ENCODE measurements at regions of chr7 and their contacts with region 1.

Region 1: GRCh38 chr7:151626422-151627115 is 106.9 kb upstream of the RHEB start:
- DNase-seq: peak; percentile 69
- H3K4me3 Mint-ChIP-seq: no peak overlapping the region
- H3K27ac Mint-ChIP-seq: no peak overlapping the region
- H3K4me1 Mint-ChIP-seq: peaks cover 49% of the 10 kb centered on the region
- H3K27me3 Mint-ChIP-seq: no peaks in the 10 kb centered on the region
- CTCF ChIP-seq: peak; percentile 60

Region 2: DNA sequence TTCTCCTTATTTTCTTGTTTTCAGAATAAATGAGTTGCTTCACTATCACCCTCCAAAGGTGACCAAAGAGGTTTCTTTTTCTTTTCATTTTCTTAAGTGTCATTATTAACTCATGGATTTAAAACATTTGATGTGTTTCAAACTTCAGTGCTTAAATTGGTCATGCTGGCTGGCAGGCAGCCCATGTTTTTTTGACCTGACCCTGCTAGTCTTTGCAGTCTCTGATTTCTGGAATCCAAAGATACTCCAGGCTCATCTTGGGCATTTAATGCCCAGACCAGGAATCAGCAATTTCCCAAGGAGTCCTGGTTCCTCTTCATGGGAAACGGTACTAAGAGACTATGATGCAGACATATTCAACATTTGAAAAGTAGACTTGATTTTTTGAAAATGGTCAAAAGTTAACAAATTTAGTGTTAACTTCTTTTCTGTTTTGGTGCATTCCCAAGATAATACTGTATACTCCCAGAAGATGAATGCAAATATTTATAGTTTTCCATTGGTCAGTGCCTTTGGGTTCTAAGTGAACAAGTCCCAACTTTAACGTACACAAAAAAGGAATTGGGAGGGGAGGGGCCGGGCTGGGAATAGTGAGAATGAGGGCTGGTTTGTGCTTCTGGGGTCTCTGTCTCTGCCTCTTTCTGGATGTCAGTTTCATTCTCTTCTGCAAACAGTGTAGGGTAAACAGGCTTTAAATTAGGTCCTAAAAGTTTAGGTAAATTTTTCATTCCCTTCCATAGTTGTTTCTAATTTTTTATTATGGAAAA is 265.2 kb before region 1 on chr7:
- CTCF ChIA-PET with region 1: no interaction called
- intact Hi-C with region 1: no loop called
- DNase-seq: no peak
- H3K4me3 Mint-ChIP-seq: no peak overlapping the region
- H3K27ac Mint-ChIP-seq: no peak overlapping the region
- H3K4me1 Mint-ChIP-seq: no peaks in the 10 kb centered on the region
- H3K27me3 Mint-ChIP-seq: no peaks in the 10 kb centered on the region
- CTCF ChIP-seq: no peak

Region 3: GRCh38 chr7:151570366-151570915 is 56.1 kb before region 1 on chr7:
- CTCF ChIA-PET with region 1: no interaction called
- intact Hi-C with region 1: loop called (anchors 2 kb)
- DNase-seq: no peak
- H3K4me3 Mint-ChIP-seq: no peak overlapping the region
- H3K27ac Mint-ChIP-seq: no peak overlapping the region
- H3K4me1 Mint-ChIP-seq: no peaks in the 10 kb centered on the region
- H3K27me3 Mint-ChIP-seq: no peaks in the 10 kb centered on the region
- CTCF ChIP-seq: peak; percentile 37

Region 4: GRCh38 chr7:151705636-151706276 is 79.2 kb after region 1 on chr7:
- CTCF ChIA-PET with region 1: no interaction called
- intact Hi-C with region 1: loop called (anchors 1 kb)
- DNase-seq: peak; percentile 58
- H3K4me3 Mint-ChIP-seq: no peak overlapping the region
- H3K27ac Mint-ChIP-seq: peak overlapping the region; percentile 50
- H3K4me1 Mint-ChIP-seq: peaks cover 16% of the 10 kb centered on the region
- H3K27me3 Mint-ChIP-seq: no peaks in the 10 kb centered on the region
- CTCF ChIP-seq: peak; percentile 45

Region 5: GRCh38 chr7:151736403-151736909 is 109.9 kb after region 1 on chr7:
- CTCF ChIA-PET with region 1: interaction called, 11 read pairs
- intact Hi-C with region 1: no loop called
- DNase-seq: peak; percentile 72
- H3K4me3 Mint-ChIP-seq: peak overlapping the region; percentile 63
- H3K27ac Mint-ChIP-seq: peak overlapping the region; percentile 74
- H3K4me1 Mint-ChIP-seq: peaks cover 6% of the 10 kb centered on the region
- H3K27me3 Mint-ChIP-seq: no peaks in the 10 kb centered on the region
- CTCF ChIP-seq: peak; percentile 26

Region 6: DNA sequence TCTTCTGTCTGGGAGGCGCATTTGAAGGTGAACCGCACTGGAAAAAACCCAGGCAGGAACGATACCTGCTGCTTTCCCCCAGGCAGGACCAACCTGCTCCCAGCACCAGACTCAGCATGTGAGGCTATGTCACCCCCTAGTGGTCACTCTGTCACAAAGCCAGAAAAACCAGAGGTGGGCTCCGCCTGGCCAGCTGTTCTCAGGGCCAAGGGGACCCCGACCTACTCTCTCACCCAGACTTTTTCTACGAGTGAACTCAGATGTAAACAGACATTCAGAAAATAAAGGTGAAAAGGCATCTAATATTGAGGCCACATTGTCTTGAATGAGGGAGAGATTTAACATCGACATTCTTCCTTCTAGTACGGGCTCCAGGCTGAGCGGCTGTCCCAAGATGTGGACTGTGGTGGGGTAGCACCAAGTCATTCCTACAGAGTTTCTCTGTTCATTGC is 133.0 kb after region 1 on chr7:
- CTCF ChIA-PET with region 1: interaction called, 4 read pairs
- intact Hi-C with region 1: loop called (anchors 1 kb)
- DNase-seq: peak; percentile 80
- H3K4me3 Mint-ChIP-seq: no peak overlapping the region
- H3K27ac Mint-ChIP-seq: no peak overlapping the region
- H3K4me1 Mint-ChIP-seq: peaks cover 36% of the 10 kb centered on the region
- H3K27me3 Mint-ChIP-seq: no peaks in the 10 kb centered on the region
- CTCF ChIP-seq: peak; percentile 93

Measured in Calu3 (cell line).